ENCODE measurements at regions of chr20 and their contacts with region 1.

Region 1: GRCh38 chr20:31572701-31573554 is 32.2 kb upstream of the ID1 start:
- DNase-seq: peak; percentile 90
- ATAC-seq: peak; percentile 86
- H3K4me3 Mint-ChIP-seq: peak overlapping the region; percentile 84
- H3K27ac Mint-ChIP-seq: peak overlapping the region; percentile 78
- H3K4me1 Mint-ChIP-seq: peaks cover 37% of the 10 kb centered on the region
- H3K27me3 Mint-ChIP-seq: no peaks in the 10 kb centered on the region
- CTCF ChIP-seq: no peak

Region 2: GRCh38 chr20:31430568-31431115 is 142.3 kb before region 1 on chr20:
- CTCF ChIA-PET with region 1: no interaction called
- POLR2A ChIA-PET with region 1: no interaction called
- intact Hi-C with region 1: no loop called
- DNase-seq: no peak
- ATAC-seq: no peak
- H3K4me3 Mint-ChIP-seq: no peak overlapping the region
- H3K27ac Mint-ChIP-seq: no peak overlapping the region
- H3K4me1 Mint-ChIP-seq: no peaks in the 10 kb centered on the region
- H3K27me3 Mint-ChIP-seq: peaks cover 7% of the 10 kb centered on the region
- CTCF ChIP-seq: no peak

Region 3: GRCh38 chr20:31547017-31547675 is 25.8 kb before region 1 on chr20:
- CTCF ChIA-PET with region 1: interaction called, 39 read pairs
- POLR2A ChIA-PET with region 1: interaction called, 4 read pairs
- intact Hi-C with region 1: no loop called
- DNase-seq: peak; percentile 89
- ATAC-seq: peak; percentile 65
- H3K4me3 Mint-ChIP-seq: peak overlapping the region; percentile 84
- H3K27ac Mint-ChIP-seq: peak overlapping the region; percentile 97
- H3K4me1 Mint-ChIP-seq: peaks cover 34% of the 10 kb centered on the region
- H3K27me3 Mint-ChIP-seq: no peaks in the 10 kb centered on the region
- CTCF ChIP-seq: no peak

Region 4: GRCh38 chr20:31560094-31560899 is 12.6 kb before region 1 on chr20:
- CTCF ChIA-PET with region 1: interaction called, 45 read pairs
- POLR2A ChIA-PET with region 1: interaction called, 4 read pairs
- intact Hi-C with region 1: no loop called
- DNase-seq: peak; percentile 88
- ATAC-seq: peak; percentile 80
- H3K4me3 Mint-ChIP-seq: no peak overlapping the region
- H3K27ac Mint-ChIP-seq: peak overlapping the region; percentile 76
- H3K4me1 Mint-ChIP-seq: peaks cover 22% of the 10 kb centered on the region
- H3K27me3 Mint-ChIP-seq: no peaks in the 10 kb centered on the region
- CTCF ChIP-seq: peak; percentile 95

Region 5: DNA sequence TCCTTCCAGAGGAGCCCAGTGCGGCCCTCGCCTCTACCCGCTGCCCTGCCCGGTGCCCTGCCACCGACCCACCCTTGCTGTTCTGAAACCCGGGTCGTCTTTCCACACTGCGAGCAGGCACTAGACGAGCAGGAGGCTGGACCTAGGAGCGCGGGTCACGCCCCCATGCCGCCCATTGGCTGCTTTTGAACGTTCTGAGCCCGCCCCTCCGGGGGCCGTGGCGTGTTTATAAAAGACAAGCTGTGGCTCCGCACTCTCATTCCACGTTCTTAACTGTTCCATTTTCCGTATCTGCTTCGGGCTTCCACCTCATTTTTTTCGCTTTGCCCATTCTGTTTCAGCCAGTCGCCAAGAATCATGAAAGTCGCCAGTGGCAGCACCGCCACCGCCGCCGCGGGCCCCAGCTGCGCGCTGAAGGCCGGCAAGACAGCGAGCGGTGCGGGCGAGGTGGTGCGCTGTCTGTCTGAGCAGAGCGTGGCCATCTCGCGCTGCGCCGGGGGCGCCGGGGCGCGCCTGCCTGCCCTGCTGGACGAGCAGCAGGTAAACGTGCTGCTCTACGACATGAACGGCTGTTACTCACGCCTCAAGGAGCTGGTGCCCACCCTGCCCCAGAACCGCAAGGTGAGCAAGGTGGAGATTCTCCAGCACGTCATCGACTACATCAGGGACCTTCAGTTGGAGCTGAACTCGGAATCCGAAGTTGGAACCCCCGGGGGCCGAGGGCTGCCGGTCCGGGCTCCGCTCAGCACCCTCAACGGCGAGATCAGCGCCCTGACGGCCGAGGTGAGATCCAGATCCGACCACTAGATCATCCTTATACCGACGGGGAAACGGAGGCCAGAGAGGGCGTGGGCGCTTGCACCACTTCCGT is 32.3 kb after region 1 on chr20 and contains the start of gene ID1:
- CTCF ChIA-PET with region 1: interaction called, 1,008 read pairs
- POLR2A ChIA-PET with region 1: interaction called, 38 read pairs
- intact Hi-C with region 1: no loop called
- DNase-seq: peak; percentile 93
- ATAC-seq: peak; percentile 86
- H3K4me3 Mint-ChIP-seq: peak within 1 kb of the TSS; percentile 78
- H3K27ac Mint-ChIP-seq: no peak within 1 kb of the TSS
- H3K4me1 Mint-ChIP-seq: peaks cover 22% of the 10 kb centered on the region
- H3K27me3 Mint-ChIP-seq: peaks cover 49% of the 10 kb centered on the region
- CTCF ChIP-seq: no peak
- total RNA-seq, gene ID1: 0.41 to 0.54 TPM

Region 6: DNA sequence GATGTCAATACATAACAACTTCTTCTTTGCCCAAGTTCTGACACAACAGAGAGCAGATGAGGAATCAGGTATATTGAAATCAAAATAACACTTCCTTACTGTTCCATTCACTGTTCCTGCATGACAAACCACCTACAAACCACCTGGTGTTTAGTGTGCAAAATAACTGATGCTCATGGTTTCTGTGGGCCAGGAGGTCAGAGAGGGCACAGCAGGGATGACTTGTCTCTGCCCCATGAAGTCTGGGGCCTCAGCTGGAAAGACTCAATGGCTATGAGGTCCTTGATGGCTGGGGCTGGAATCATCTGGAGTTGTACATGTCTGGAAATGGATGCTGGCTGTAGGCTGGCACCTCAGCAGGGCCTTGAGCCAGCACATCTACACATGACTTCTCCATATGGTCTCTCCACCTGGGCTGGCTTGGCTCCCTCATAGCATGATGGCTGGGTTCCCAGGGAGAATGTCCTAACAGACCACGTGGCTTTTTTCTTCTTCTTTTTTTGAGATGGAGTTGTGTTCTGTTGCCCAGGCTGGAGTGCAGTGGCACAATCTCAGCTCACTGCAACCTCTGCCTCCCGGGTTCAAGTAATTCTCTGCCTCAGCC is 57.4 kb after region 1 on chr20:
- CTCF ChIA-PET with region 1: interaction called, 14 read pairs
- POLR2A ChIA-PET with region 1: no interaction called
- intact Hi-C with region 1: no loop called
- DNase-seq: peak; percentile 30
- ATAC-seq: peak; percentile 42
- H3K4me3 Mint-ChIP-seq: no peak overlapping the region
- H3K27ac Mint-ChIP-seq: no peak overlapping the region
- H3K4me1 Mint-ChIP-seq: peaks cover 5% of the 10 kb centered on the region
- H3K27me3 Mint-ChIP-seq: no peaks in the 10 kb centered on the region
- CTCF ChIP-seq: no peak

Region 7: GRCh38 chr20:31731321-31731717 is 158.4 kb after region 1 on chr20:
- CTCF ChIA-PET with region 1: no interaction called
- POLR2A ChIA-PET with region 1: no interaction called
- intact Hi-C with region 1: no loop called
- DNase-seq: no peak
- ATAC-seq: no peak
- H3K4me3 Mint-ChIP-seq: no peak overlapping the region
- H3K27ac Mint-ChIP-seq: no peak overlapping the region
- H3K4me1 Mint-ChIP-seq: no peaks in the 10 kb centered on the region
- H3K27me3 Mint-ChIP-seq: no peaks in the 10 kb centered on the region
- CTCF ChIP-seq: no peak